Mammary epithelial cell (primary cell): ENCODE measurements at regions of chr2 and their contacts with region 1.

Region 1: GRCh38 chr2:105576440-105577252 is 168.1 kb upstream of the NCK2 start:
- DNase-seq: peak; percentile 77
- H3K4me3 ChIP-seq: no peak overlapping the region
- H3K27ac ChIP-seq: peak overlapping the region; percentile 81
- H3K4me1 ChIP-seq: peaks cover 31% of the 10 kb centered on the region
- H3K27me3 ChIP-seq: no peaks in the 10 kb centered on the region
- CTCF ChIP-seq: peak; percentile 69 to 74

Region 2: DNA sequence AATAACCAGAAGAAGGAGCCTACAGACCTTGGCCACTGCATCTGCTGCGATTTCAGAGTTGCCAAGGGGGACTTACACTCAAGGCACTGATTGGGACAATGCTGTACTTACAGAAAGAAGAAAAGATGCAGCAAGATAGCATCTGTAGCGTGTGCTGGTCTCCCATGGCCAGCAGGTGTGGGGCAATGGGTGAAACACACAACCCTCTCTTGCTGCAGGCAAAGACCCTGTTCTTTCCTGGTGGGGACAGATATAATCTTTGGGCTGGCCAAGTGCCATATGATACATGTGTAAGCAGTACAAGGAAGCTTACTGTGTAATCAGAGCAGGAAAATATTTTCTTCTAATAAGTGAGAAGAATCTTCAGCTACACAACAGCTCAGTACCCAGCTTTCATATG is 420.4 kb before region 1 on chr2:
- CTCF ChIA-PET with region 1: no interaction called
- dilution Hi-C with region 1: no loop called
- in situ Hi-C with region 1: no loop called
- intact Hi-C with region 1: no loop called
- DNase-seq: no peak
- H3K4me3 ChIP-seq: no peak overlapping the region
- H3K27ac ChIP-seq: no peak overlapping the region
- H3K4me1 ChIP-seq: no peaks in the 10 kb centered on the region
- H3K27me3 ChIP-seq: no peaks in the 10 kb centered on the region
- CTCF ChIP-seq: no peak

Region 3: DNA sequence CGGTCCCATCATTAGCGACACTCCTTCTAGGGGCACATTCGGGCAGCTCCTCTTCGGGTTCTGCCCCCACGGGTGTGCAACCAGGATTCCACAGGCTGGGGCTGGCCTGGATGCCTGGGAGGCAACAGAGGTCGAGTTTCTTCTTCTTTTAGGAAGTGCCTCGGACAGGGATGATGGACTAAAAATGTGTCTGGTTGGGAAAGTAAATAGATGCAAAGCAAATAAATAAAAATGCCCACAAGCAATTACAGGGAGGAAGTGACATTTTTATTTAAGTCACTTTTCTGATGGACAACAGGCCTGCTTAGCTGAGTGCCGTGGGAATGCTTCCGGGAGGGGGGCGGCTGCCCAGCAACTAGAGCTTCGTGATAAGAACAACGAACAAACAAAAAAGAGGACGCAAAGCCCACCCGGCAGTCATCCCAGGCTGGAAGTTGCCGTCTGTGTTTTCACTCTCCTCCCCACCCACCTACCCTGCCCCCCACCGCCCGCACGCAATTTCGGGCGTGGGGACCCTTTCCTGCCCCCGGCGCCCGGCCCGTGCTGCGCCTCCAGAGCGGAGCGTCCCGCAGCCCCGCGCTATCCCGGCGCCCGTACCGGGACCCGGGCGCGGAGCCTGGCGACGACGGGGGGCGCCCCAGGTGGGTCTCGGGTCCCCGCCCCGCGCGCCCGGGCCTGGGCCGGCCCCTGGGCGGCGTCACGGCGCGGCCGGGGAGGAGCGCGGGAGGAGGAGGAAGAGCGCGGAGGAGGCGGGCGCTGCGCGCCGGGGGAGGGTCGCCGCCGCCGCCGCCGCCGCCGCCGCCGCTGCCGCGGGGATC is 167.7 kb after region 1 on chr2:
- CTCF ChIA-PET with region 1: interaction called, 3 read pairs
- dilution Hi-C with region 1: no loop called
- in situ Hi-C with region 1: loop called in 1 of 2 experiments (anchors 25 kb)
- intact Hi-C with region 1: loop called (anchors 1 kb)
- DNase-seq: no peak
- H3K4me3 ChIP-seq: peak overlapping the region; percentile 40 to 83 (median 58)
- H3K27ac ChIP-seq: no peak overlapping the region
- H3K4me1 ChIP-seq: peaks cover 33% of the 10 kb centered on the region
- H3K27me3 ChIP-seq: no peaks in the 10 kb centered on the region
- CTCF ChIP-seq: no peak

Region 4: DNA sequence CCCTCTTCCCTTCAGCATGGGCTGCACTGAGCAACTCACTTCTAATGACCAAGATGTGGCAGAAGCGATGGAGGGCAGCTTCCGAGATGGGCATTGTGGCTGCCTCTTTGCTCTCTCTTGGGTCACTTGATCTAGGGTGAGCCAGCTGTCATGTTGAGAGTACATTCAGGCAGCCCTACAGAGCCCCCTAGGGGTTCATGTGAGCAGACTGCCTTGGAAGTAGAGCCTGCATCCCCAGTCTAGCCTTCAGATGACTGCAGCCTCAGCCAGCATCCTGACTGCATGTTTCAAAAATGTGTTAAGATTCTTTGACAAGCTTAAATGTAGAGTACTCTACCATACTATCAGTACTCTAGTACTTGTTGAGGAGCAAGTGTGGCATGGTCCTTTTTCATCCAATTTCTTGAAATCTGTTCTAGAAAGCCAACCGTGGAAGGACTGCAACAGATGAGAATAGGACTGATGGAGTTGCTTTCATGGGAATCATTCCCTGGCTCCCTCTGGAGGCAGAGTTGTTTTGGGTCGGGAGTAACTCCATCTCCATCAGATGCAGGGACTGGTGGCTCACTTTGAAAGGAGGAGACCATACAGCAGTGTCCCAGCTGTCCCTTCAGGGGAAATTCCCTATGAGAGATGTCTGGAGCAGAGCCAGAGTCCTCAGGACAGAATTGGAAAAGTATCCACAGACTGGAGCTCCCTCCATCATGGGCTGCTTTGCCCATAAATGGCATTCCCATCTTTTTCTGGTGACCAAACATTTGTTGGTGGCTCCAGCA is 312.2 kb after region 1 on chr2:
- CTCF ChIA-PET with region 1: no interaction called
- dilution Hi-C with region 1: no loop called
- in situ Hi-C with region 1: no loop called
- intact Hi-C with region 1: loop called (anchors 2 kb)
- DNase-seq: no peak
- H3K4me3 ChIP-seq: no peak overlapping the region
- H3K27ac ChIP-seq: no peak overlapping the region
- H3K4me1 ChIP-seq: peaks cover 3% of the 10 kb centered on the region
- H3K27me3 ChIP-seq: no peaks in the 10 kb centered on the region
- CTCF ChIP-seq: peak in 1 of 2 donors; percentile 20

Region 5: DNA sequence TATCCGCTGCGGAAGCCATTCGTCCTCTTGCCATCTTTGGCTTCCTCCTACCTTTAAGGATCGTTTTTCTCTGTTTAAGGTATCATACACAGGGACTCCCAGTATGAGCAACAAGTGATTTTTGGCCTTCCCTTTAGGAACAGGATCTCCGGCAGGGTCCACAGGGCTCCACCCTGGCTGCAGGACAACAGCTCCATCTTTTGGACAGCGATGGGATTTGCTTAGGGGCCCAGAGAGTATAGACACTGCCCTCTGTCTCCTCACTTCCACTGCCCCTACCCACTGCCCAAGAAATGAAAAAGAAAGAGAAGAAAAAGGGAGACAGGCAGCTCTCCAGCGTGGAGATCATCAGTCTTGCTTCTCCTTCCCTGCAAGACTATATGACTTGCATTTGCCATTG is 392.9 kb after region 1 on chr2:
- CTCF ChIA-PET with region 1: no interaction called
- dilution Hi-C with region 1: no loop called
- in situ Hi-C with region 1: no loop called
- intact Hi-C with region 1: loop called (anchors 1 kb)
- DNase-seq: peak; percentile 20
- H3K4me3 ChIP-seq: no peak overlapping the region
- H3K27ac ChIP-seq: no peak overlapping the region
- H3K4me1 ChIP-seq: no peaks in the 10 kb centered on the region
- H3K27me3 ChIP-seq: no peaks in the 10 kb centered on the region
- CTCF ChIP-seq: peak; percentile 44 to 50

Region 6: DNA sequence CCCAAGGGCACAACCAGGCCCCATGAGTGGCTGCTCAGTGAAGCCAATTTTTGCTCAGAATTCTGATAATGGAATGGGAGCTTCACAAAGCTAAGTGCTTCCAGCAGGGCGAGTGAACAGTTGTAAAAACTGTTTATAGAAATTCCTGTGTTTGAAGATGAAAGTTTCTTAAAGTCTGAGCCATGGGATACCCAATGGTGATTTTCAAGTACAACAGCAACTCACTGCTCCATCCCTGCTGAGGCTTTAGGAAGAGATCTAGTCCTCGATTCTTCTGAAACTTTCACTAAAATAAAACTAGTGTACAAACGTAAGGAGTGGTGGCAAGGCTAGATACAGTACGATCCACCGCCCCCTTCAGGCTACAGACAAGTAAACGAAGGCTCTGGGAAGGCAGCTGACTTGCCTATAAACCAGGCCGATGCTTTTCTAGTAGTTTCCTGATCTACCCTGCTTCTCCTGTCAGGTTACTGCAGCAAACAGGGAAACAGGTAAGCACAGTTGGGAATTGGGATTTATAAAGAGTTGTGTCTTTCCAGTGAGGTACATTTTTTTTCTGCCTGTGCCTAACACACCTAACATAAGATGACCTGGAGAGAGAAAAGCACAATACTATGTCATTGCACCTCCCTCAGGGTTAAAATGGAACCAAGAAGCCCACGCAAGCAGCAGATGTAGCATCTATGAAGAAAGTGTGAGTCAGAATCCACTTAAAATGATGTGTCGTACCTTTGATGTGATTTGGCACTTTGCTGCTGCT is 508.7 kb after region 1 on chr2:
- CTCF ChIA-PET with region 1: no interaction called
- dilution Hi-C with region 1: no loop called
- in situ Hi-C with region 1: loop called (anchors 10 to 25 kb)
- intact Hi-C with region 1: loop called (anchors 5 kb)
- DNase-seq: peak; percentile 25
- H3K4me3 ChIP-seq: no peak overlapping the region
- H3K27ac ChIP-seq: no peak overlapping the region
- H3K4me1 ChIP-seq: peaks cover 5% of the 10 kb centered on the region
- H3K27me3 ChIP-seq: no peaks in the 10 kb centered on the region
- CTCF ChIP-seq: peak in 1 of 2 donors; percentile 36

Region 7: GRCh38 chr2:106098081-106098480 is 521.4 kb after region 1 on chr2:
- CTCF ChIA-PET with region 1: no interaction called
- dilution Hi-C with region 1: no loop called
- in situ Hi-C with region 1: loop called (anchors 10 to 25 kb)
- intact Hi-C with region 1: no loop called
- DNase-seq: no peak
- H3K4me3 ChIP-seq: no peak overlapping the region
- H3K27ac ChIP-seq: no peak overlapping the region
- H3K4me1 ChIP-seq: no peaks in the 10 kb centered on the region
- H3K27me3 ChIP-seq: no peaks in the 10 kb centered on the region
- CTCF ChIP-seq: peak; percentile 20 to 44

Region 8: GRCh38 chr2:106542811-106543259 is 966.2 kb after region 1 on chr2:
- CTCF ChIA-PET with region 1: no interaction called
- dilution Hi-C with region 1: no loop called
- in situ Hi-C with region 1: no loop called
- intact Hi-C with region 1: loop called (anchors 5 kb)
- DNase-seq: peak; percentile 27
- H3K4me3 ChIP-seq: peak overlapping the region in 1 of 3 experiments; percentile 9
- H3K27ac ChIP-seq: no peak overlapping the region
- H3K4me1 ChIP-seq: no peaks in the 10 kb centered on the region
- H3K27me3 ChIP-seq: no peaks in the 10 kb centered on the region
- CTCF ChIP-seq: peak; percentile 80 to 95